H1 (cell line): ENCODE measurements at regions of chr19 and their contacts with region 1.

Region 1: GRCh38 chr19:48135411-48135810 is 24.8 kb upstream of the PLA2G4C start:
- DNase-seq: peak in 1 of 2 experiments; percentile 59
- H3K4me3 ChIP-seq: no peak overlapping the region
- H3K27ac ChIP-seq: no peak overlapping the region
- H3K4me1 ChIP-seq: no peaks in the 10 kb centered on the region
- H3K27me3 ChIP-seq: no peaks in the 10 kb centered on the region
- CTCF ChIP-seq: no peak
- EP300 ChIP-seq: no peak
- POLR2A ChIP-seq: no peak
- RAD21 ChIP-seq: no peak

Region 2: DNA sequence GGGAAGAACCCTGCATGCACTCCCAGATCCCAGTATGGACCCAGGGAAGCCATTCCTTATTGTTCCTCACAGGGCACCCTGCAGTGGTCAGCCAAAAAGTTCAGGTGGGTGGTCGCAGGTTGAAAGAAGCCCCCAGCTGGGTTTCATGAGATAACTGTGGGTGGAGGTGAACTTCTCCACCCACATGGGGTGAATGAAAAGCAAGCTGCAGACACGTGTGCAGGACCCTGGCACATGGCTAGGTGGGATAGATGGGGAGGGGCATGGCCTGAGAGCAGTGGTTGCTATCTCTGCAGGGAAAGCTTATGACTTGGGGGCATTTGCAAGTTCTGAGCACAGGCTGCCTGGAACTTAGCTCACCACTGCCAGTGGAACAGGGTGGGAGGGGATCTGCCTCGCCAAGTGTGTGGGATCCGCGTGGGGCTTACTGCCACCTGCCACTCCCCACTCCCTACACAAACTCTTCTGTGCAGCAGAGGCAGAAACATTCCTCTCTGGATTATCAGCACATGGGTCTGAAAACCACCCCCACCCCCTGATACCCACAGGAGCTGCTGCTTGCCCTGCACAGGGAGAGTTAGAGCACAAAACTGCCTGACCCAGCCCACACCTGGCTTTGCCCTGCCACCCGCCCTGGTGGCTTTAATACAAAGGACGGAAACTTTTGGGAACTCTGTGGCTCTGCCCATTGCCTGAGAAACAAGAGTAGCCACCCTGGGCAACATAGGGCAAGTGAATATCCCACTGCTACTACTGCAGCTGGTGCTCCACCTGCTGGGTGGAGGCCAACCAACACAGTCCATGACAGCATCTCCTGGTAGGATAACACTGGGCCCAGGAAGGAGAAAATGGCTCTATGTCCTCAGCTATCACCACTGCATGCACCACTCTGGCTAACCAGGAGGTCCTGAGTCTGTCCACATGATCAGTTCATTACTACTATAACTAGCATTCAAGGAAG is 49.2 kb before region 1 on chr19:
- CTCF ChIA-PET with region 1: no interaction called
- POLR2A ChIA-PET with region 1: no interaction called
- DNase-seq: peak in 1 of 2 experiments; percentile 67
- H3K4me3 ChIP-seq: no peak overlapping the region
- H3K27ac ChIP-seq: no peak overlapping the region
- H3K4me1 ChIP-seq: no peaks in the 10 kb centered on the region; a peak in 1 of 7 replicates
- H3K27me3 ChIP-seq: no peaks in the 10 kb centered on the region; a peak in 2 of 7 replicates
- CTCF ChIP-seq: peak; percentile 68 to 78 (median 73)
- EP300 ChIP-seq: no peak
- POLR2A ChIP-seq: 0 out of 3 replicates have a peak, but pooled peaks of 1 of the 2 experiments have one; percentile 23
- RAD21 ChIP-seq: peak; percentile 55 to 71

Region 3: GRCh38 chr19:48123907-48124651 is 11.3 kb before region 1 on chr19:
- CTCF ChIA-PET with region 1: interaction called, 27 read pairs
- POLR2A ChIA-PET with region 1: interaction called, 4 read pairs
- DNase-seq: no peak
- H3K4me3 ChIP-seq: no peak overlapping the region
- H3K27ac ChIP-seq: no peak overlapping the region
- H3K4me1 ChIP-seq: no peaks in the 10 kb centered on the region
- H3K27me3 ChIP-seq: no peaks in the 10 kb centered on the region
- CTCF ChIP-seq: no peak
- EP300 ChIP-seq: no peak
- POLR2A ChIP-seq: no peak
- RAD21 ChIP-seq: no peak

Region 4: DNA sequence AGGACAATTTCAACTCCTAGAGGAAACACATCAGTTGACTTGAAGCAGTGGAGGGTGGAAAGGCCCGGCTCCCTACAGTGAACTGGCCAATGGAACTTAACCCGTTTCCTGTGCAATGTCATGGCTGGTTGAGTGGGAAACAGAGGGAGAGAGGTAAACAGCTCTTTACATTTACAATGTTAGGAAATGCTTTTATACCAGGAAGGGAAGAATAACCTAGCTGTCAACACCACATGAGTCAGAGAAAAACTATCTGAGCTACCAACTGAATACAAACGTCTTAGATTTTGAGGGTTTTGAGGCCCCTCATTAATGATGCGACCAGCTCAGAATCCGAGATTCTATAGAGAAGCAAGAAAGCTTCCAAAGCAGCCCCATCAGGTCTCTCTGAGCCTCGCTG is 83.6 kb after region 1 on chr19:
- CTCF ChIA-PET with region 1: no interaction called
- POLR2A ChIA-PET with region 1: no interaction called
- DNase-seq: no peak
- H3K4me3 ChIP-seq: no peak overlapping the region
- H3K27ac ChIP-seq: no peak overlapping the region
- H3K4me1 ChIP-seq: no peaks in the 10 kb centered on the region; a peak in 1 of 7 replicates
- H3K27me3 ChIP-seq: no peaks in the 10 kb centered on the region
- CTCF ChIP-seq: no peak
- EP300 ChIP-seq: no peak
- POLR2A ChIP-seq: no peak
- RAD21 ChIP-seq: no peak